OCI-LY7 (cell line): ENCODE measurements at regions of chr17 and their contacts with region 1.

Region 1: DNA sequence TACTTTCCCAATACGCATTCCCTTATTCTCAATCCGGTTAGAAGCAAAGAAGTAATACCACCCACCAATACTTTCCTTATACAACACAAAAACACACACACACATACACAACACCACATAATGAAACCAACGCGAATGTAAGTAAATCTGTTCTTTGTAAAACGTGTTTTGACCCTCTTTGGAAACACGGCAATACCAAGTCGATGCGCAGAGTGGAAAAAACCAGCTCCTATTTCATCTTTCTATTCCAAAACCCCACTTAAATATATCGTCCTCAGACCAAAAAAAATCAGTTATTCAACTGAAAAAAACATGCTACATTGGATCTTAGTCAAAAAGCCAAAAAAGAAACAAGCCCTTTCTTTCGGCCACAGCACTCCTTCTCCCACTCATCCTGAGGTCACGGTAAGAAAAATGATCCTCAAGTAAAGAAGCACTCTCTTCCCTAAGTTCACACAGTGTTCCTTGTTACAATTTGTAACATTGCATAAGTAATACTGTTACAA is 31.0 kb upstream of the ARL4D start:
- DNase-seq: peak; percentile 89
- H3K4me3 ChIP-seq: peak overlapping the region; percentile 64
- H3K27ac ChIP-seq: peak overlapping the region; percentile 54
- H3K4me1 ChIP-seq: peaks cover 30% of the 10 kb centered on the region
- CTCF ChIP-seq: no peak

Region 2: DNA sequence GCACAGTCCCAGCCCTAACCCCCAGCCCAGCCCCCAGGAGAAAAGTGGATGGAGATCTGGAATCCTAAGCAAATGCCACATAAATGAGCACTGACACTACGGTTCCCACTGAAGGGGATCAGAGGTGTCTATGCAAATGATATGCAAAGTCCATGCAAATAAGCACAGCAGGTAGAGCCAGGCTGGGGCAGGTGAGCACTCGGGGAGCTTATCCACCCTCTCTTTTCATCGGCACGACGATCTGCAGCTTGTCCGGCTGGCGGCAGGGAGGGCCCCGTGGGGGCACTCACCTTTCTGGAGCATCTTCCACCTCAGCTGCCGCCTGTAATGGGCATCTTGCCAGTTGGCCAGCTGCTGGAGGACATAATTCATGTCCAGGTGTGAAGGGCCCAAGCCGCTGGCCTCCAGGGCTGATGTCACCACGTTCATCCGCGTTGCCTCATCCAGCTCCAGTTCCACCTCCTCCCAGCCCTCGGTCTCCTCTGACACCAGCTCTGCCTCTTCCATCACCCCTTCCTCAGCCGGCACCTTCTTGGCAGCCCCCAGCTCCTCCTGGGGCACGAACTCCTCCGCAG is 1643.2 kb before region 1 on chr17:
- CTCF ChIA-PET with region 1: interaction called, 10 read pairs
- POLR2A ChIA-PET with region 1: no interaction called
- intact Hi-C with region 1: no loop called
- DNase-seq: no peak
- H3K4me3 ChIP-seq: no peak overlapping the region
- H3K27ac ChIP-seq: no peak overlapping the region
- H3K4me1 ChIP-seq: no peaks in the 10 kb centered on the region
- CTCF ChIP-seq: no peak

Region 3: GRCh38 chr17:43330876-43331639 is 36.7 kb before region 1 on chr17:
- CTCF ChIA-PET with region 1: no interaction called
- POLR2A ChIA-PET with region 1: interaction called, 6 read pairs
- intact Hi-C with region 1: loop called (anchors 5 kb)
- DNase-seq: peak; percentile 51
- H3K4me3 ChIP-seq: no peak overlapping the region
- H3K27ac ChIP-seq: no peak overlapping the region
- H3K4me1 ChIP-seq: peaks cover 9% of the 10 kb centered on the region
- CTCF ChIP-seq: peak; percentile 64

Region 4: GRCh38 chr17:43388359-43389045 is 20.7 kb after region 1 on chr17:
- CTCF ChIA-PET with region 1: no interaction called
- POLR2A ChIA-PET with region 1: interaction called, 8 read pairs
- intact Hi-C with region 1: loop called (anchors 2 kb)
- DNase-seq: peak; percentile 93
- H3K4me3 ChIP-seq: peak overlapping the region; percentile 72
- H3K27ac ChIP-seq: peak overlapping the region; percentile 67
- H3K4me1 ChIP-seq: peaks cover 5% of the 10 kb centered on the region
- CTCF ChIP-seq: no peak

Region 5: DNA sequence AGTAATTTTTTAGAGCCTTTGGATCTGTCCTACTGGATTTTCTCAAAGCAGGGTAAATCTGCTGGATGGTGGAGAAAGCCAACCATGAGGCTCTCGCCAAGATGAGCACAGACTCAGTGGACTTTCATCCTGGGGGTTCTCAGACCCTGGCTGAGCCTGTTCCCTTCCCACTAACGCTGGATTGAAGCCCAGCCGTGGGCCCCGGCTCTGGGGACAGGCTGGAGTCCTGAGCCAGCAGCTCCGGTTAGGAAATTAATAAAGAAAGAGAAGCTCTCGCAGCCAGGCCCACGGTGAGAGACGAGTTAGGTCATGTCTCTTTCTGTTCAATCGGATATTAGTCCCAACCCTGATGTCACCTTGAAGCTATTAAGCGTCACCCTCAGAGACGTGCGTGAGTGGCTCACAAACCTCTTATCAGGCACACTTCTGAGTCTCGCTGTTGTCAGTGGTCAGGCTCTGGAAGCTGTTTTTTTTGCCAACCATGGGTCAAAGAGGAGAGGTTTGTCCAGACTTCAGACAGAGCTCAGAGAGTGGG is 266.9 kb after region 1 on chr17:
- CTCF ChIA-PET with region 1: no interaction called
- POLR2A ChIA-PET with region 1: no interaction called
- intact Hi-C with region 1: no loop called
- DNase-seq: no peak
- H3K4me3 ChIP-seq: no peak overlapping the region
- H3K27ac ChIP-seq: no peak overlapping the region
- H3K4me1 ChIP-seq: no peaks in the 10 kb centered on the region
- CTCF ChIP-seq: no peak